Natural killer cell (primary cell): ENCODE measurements at regions of chr16 and their contacts with region 1.

Region 1: DNA sequence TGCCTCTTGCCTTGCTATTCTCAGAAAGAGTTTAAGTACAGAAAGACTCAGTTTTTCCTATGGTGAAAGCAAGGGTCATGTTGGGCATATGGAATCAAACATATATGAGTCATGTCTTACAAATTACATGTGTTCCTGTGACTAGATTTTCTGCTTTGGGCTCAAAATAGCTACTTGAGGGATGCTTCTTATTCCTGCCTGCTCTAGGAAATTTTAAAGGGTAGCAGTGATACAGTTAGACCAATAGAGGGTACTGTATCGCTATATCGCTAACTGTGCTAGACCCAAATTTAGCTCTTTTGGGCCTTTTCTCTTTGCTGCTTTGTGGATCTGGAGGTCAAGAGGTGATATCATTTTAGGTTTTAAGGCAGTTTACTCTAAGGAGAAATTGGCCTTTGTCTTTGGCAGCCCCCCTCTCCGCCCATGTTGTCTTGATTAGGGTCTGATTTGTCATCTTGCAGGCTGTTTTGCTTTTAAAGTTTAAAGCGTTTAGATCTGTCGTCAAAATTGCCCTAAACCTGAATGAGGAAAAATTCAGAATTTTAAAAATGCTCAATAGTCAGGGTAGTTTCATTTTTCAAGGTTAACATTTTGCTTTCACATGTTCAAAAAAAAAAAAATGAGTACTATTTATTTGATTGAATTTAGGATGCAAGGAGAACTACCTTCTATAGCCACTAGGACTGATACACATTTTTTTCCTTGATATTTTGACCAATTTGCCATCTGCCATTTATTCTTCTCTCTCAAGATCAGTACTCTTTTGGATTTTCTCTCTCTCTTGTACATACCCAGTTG is 8.8 kb downstream of the NFATC3 start:
- DNase-seq: peak in 1 of 2 donors; percentile 64
- ATAC-seq: peak; percentile 78 to 85 (median 85)
- H3K4me3 ChIP-seq: no peak overlapping the region
- H3K4me3 Mint-ChIP-seq: peak overlapping the region; percentile 47
- H3K27ac ChIP-seq: peak overlapping the region; percentile 58
- H3K27ac Mint-ChIP-seq: peak overlapping the region; percentile 66 to 89
- H3K4me1 ChIP-seq: peaks cover 31% of the 10 kb centered on the region
- H3K4me1 Mint-ChIP-seq: peaks cover 82 to 84% of the 10 kb centered on the region in 2 donors
- H3K27me3 ChIP-seq: no peaks in the 10 kb centered on the region
- H3K27me3 Mint-ChIP-seq: no peaks in the 10 kb centered on the region
- CTCF ChIP-seq: peak; percentile 61

Region 2: DNA sequence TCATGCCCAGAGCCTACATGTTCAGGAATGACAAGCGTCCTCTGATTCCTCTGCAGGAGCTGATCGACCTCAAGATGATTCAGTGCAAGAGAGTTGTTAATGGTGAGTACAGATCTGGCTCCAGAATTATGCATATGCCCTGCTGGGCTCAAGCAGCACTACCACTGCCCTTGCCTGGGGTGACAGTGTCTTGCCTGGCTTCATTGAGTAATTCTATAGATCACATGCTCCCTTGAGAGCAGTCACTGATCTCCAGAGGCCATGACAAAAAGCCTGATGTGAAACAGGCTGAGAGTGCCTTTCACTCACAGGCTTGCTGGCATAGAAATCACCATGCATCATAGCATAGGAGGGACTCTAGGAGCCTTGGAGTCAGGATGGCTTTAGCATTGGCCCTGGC is 44.6 kb before region 1 on chr16:
- intact Hi-C with region 1: no loop called
- DNase-seq: no peak
- ATAC-seq: no peak
- H3K4me3 ChIP-seq: no peak overlapping the region
- H3K4me3 Mint-ChIP-seq: no peak overlapping the region
- H3K27ac ChIP-seq: no peak overlapping the region
- H3K27ac Mint-ChIP-seq: no peak overlapping the region
- H3K4me1 ChIP-seq: peaks cover 2% of the 10 kb centered on the region
- H3K4me1 Mint-ChIP-seq: peaks cover 8 to 12% of the 10 kb centered on the region in 2 donors
- H3K27me3 ChIP-seq: no peaks in the 10 kb centered on the region
- H3K27me3 Mint-ChIP-seq: no peaks in the 10 kb centered on the region
- CTCF ChIP-seq: no peak

Region 3: GRCh38 chr16:68146585-68146984 is 52.6 kb after region 1 on chr16:
- intact Hi-C with region 1: loop called (anchors 10 kb)
- DNase-seq: no peak
- ATAC-seq: peak; percentile 62 to 69 (median 67)
- H3K4me3 ChIP-seq: no peak overlapping the region
- H3K4me3 Mint-ChIP-seq: no peak overlapping the region
- H3K27ac ChIP-seq: no peak overlapping the region
- H3K27ac Mint-ChIP-seq: peak overlapping the region; percentile 76 to 86
- H3K4me1 ChIP-seq: peaks cover 8% of the 10 kb centered on the region
- H3K4me1 Mint-ChIP-seq: peaks cover 53 to 68% of the 10 kb centered on the region in 2 donors
- H3K27me3 ChIP-seq: no peaks in the 10 kb centered on the region
- H3K27me3 Mint-ChIP-seq: no peaks in the 10 kb centered on the region
- CTCF ChIP-seq: no peak